ENCODE measurements at regions of chr15 and their contacts with region 1.

Region 1: DNA sequence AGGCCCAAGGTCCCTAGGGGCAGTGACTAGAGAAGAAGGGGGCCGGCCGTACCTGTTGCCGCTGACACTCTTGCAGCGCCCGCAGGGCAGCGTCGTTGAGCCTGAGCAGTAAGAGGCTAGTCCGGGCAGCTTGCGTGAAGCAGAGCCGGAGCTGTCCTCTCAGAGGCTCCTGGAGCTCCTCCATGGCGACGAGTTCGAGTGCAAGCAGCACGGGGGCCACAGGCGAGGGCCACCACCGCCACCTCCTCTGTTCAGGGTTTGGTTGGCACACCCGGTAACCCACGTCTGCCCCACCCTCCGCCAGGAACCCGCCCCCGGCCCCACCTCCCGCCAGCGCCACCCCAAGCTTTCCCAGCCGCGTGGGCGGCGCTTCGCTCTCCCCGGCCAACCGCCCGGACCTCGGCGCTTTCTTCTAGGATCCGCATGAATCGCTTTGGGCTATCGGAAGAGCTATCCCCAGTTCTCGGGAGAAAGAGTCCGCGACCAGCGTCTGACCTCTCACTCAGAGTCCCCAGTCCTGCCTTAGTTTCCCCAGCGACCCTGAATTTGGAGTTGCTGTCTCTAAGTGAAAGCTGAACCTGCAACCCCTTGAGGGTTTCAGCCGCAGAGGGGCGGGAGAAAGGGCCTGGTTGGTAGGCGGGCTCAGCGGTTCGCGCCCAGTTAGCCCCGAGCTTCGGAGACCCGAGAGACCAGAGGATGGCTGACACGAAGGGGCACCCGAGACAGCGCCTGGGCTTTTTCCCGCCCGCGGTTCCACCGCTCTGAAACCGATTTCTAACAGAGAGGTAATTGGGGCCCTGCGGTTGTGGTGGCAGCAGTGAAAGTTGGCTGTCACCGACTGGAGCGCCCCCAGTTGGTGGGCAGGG is at the start of gene ELL3:
- DNase-seq: peak; percentile 67 to 94 (median 79)
- ATAC-seq: peak; percentile 79
- H3K4me3 ChIP-seq: peak within 1 kb of the TSS; percentile 79
- H3K4me3 Mint-ChIP-seq: peak within 1 kb of the TSS; percentile 94
- H3K27ac ChIP-seq: peak within 1 kb of the TSS; percentile 63 to 82
- H3K27ac Mint-ChIP-seq: peak within 1 kb of the TSS; percentile 94
- H3K4me1 ChIP-seq: peaks cover 25% of the 10 kb centered on the region
- H3K4me1 Mint-ChIP-seq: peaks cover 22% of the 10 kb centered on the region
- H3K27me3 ChIP-seq: no peaks in the 10 kb centered on the region
- H3K27me3 Mint-ChIP-seq: no peaks in the 10 kb centered on the region
- CTCF ChIP-seq: peak; percentile 77
- total RNA-seq, gene ELL3: 1.1 to 2.3 TPM

Region 2: DNA sequence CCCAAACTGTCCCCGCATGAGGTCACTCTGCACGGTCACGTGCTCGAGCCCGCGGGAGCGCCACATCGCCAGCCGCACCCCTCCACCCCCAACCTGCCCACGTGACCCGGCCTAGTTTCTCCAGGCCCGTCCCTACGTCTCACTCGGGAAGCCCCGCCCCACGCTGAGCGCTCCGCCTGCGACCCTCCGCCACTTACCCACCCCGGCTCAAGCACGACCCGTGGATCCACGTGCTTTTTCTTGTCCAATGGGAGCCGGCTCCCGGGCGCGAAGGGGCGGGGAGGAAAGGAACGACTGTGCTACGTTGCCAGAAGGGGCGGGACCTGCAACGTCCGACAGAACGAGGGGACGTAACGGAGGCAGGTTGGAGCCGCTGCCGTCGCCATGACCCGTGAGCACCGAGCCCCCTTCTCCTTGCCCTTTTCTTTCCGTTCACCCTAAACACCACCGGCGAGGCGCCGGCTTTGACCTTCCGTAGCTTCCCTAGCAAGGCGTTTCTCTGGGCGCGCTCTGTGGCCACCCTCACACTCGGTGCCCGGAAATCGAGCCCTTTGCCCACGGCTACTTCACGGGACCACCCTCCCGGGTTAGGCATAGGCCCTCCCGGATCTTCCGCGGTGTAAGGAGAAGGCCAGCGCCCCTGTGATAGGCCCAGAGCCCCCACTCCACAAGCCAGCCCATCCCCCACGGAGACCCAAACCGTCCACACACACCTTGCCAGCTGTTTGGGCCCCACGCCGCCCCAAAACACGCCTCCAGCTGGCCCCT is 15.2 kb after region 1 on chr15 and contains the start of gene SERF2:
- CTCF ChIA-PET with region 1: interaction called, 29 read pairs
- POLR2A ChIA-PET with region 1: interaction called, 55 read pairs
- intact Hi-C with region 1: loop called (anchors 1 kb)
- DNase-seq: peak; percentile 98 to 100 (median 99)
- ATAC-seq: peak; percentile 94
- H3K4me3 ChIP-seq: peak within 1 kb of the TSS; percentile 100
- H3K4me3 Mint-ChIP-seq: peak within 1 kb of the TSS; percentile 99
- H3K27ac ChIP-seq: peak within 1 kb of the TSS; percentile 98 to 99
- H3K27ac Mint-ChIP-seq: peak within 1 kb of the TSS; percentile 99
- H3K4me1 ChIP-seq: peaks cover 38% of the 10 kb centered on the region
- H3K4me1 Mint-ChIP-seq: peaks cover 58% of the 10 kb centered on the region
- H3K27me3 ChIP-seq: peaks cover 0 to 3% of the 10 kb centered on the region in 2 experiments
- H3K27me3 Mint-ChIP-seq: no peaks in the 10 kb centered on the region
- CTCF ChIP-seq: no peak
- total RNA-seq, gene SERF2: 319 to 323 TPM

Region 3: GRCh38 chr15:43800286-43801141 is 23.6 kb after region 1 on chr15 and contains the start of gene HYPK:
- CTCF ChIA-PET with region 1: interaction called, 6 read pairs
- POLR2A ChIA-PET with region 1: interaction called, 48 read pairs
- intact Hi-C with region 1: loop called in 1 of 2 experiments (anchors 2 kb)
- DNase-seq: peak; percentile 85 to 96 (median 92)
- ATAC-seq: peak; percentile 98
- H3K4me3 ChIP-seq: peak within 1 kb of the TSS; percentile 82
- H3K4me3 Mint-ChIP-seq: peak within 1 kb of the TSS; percentile 94
- H3K27ac ChIP-seq: peak within 1 kb of the TSS; percentile 79 to 92
- H3K27ac Mint-ChIP-seq: peak within 1 kb of the TSS; percentile 90
- H3K4me1 ChIP-seq: peaks cover 28% of the 10 kb centered on the region
- H3K4me1 Mint-ChIP-seq: peaks cover 59% of the 10 kb centered on the region
- H3K27me3 ChIP-seq: no peaks in the 10 kb centered on the region
- H3K27me3 Mint-ChIP-seq: no peaks in the 10 kb centered on the region
- CTCF ChIP-seq: no peak
- total RNA-seq, gene HYPK: 17.6 to 18.5 TPM